ENCODE measurements at regions of chr10 and their contacts with region 1.

Region 1: GRCh38 chr10:123967396-123968243 is 76.0 kb upstream of the CPXM2 start:
- DNase-seq: peak; percentile 85
- H3K27ac ChIP-seq: no peak overlapping the region
- CTCF ChIP-seq: peak; percentile 70

Region 2: GRCh38 chr10:123582084-123582989 is 385.3 kb before region 1 on chr10:
- CTCF ChIA-PET with region 1: interaction called, 23 read pairs
- POLR2A ChIA-PET with region 1: no interaction called
- DNase-seq: peak; percentile 80
- H3K27ac ChIP-seq: no peak overlapping the region
- CTCF ChIP-seq: peak; percentile 87

Measured in RWPE1 (cell line).